Posterior cingulate gyrus (tissue), 11 donors: ENCODE measurements at regions of chr2 and their contacts with region 1.

Region 1: DNA sequence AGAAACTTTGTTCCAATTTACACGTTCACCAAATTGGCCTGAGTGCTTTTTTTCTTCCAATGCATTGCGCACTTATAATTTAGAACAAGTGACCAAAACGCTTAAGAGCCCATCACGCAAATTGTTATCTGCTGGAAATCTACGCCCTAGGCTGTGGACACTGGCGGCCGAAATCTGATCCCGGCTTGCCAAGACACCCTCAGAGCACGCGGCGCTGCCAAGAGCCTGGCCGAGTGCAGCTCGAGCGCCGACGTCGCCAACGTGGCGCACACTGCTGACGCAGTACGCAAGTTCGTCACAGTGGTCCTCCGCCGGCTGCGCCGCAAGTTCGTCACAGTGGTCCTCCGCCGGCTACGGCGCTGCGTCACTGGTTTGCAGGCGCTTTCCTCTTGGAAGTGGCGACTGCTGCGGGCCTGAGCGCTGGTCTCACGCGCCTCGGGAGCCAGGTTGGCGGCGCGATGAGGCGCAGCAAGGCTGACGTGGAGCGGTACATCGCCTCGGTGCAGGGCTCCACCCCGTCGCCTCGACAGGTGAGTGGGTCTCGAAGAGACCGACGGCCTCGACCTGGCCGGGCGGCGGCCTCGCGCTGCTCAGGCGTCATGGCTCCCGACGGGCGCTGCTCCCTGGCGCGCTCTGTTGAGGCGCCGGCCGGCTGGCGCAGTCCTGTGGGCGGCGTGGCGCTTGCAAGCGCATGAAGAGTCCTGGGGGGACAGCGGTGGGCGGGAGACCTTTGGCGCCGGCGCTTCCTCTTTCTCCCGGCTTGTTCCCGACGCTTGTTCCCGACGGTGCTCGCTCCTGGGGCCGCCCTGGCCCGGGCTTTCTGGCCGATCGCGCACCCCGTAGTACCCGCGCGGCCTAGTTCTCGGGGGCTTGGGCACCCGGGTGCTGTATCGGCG is at the start of gene RANBP2:
- DNase-seq: peak; percentile 90 to 99 (median 95)

Region 2: GRCh38 chr2:108448678-108449493 is 270.5 kb before region 1 on chr2 and contains the start of gene GCC2:
- intact Hi-C with region 1: loop called (anchors 2 kb)
- DNase-seq: peak; percentile 90 to 99 (median 95)

Region 3: DNA sequence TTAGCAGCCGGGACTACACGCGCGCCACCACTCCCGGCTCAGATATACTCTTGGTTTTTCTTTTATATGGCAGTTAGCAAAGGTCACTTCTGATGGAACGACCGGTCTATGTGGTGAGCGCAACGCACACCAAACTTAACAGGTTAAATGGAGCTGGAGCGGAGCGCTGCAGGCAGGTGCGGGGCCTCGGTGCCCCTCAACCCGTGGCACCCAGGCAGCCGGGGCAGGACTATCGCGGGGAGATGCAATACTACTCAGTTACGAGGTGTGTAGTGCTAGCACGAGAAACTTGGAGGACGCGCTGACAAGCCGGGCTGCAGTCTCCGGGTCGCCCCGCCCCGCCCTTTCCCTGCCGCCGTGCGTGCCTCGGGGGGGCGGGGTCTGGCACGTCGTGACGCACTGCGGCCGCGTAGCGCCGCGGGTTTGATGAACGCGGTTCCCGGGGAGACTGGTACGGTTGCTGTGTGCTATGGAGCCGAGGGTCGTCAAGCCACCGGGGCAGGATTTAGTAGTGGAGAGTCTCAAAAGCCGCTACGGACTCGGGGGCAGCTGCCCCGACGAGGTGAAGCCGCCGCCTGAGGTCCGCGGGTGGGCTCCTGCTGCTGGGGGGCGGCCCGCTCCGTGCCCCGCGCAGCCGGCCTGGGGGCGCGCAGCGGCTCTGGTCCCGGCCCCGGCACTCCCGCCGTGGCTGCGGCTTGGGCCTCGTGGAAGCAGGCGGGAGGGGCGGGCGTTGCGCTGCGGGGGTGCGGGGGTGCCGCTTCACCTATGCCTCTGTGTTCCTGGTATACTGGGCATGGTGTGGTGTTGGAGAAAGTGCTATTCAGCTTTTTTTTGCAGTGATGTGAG is 67.2 kb after region 1 on chr2 and contains the start of gene CCDC138:
- intact Hi-C with region 1: no loop called
- DNase-seq: peak; percentile 72 to 98 (median 84)

Region 4: GRCh38 chr2:109110170-109110569 is 390.8 kb after region 1 on chr2:
- intact Hi-C with region 1: no loop called
- DNase-seq: no peak